AG04450 (cell line): ENCODE measurements at regions of chr1 and their contacts with region 1.

Region 1: GRCh38 chr1:95084317-95085176 is 11.8 kb upstream of the ALG14 start:
- DNase-seq: no peak
- H3K4me3 ChIP-seq: no peak overlapping the region
- H3K27ac ChIP-seq: no peak overlapping the region
- H3K27me3 ChIP-seq: peaks cover 6% of the 10 kb centered on the region
- CTCF ChIP-seq: peak; percentile 57

Region 2: GRCh38 chr1:94903280-94904009 is 181.1 kb before region 1 on chr1:
- CTCF ChIA-PET with region 1: no interaction called
- POLR2A ChIA-PET with region 1: no interaction called
- DNase-seq: no peak
- H3K4me3 ChIP-seq: no peak overlapping the region
- H3K27ac ChIP-seq: no peak overlapping the region
- H3K27me3 ChIP-seq: no peaks in the 10 kb centered on the region
- CTCF ChIP-seq: no peak

Region 3: DNA sequence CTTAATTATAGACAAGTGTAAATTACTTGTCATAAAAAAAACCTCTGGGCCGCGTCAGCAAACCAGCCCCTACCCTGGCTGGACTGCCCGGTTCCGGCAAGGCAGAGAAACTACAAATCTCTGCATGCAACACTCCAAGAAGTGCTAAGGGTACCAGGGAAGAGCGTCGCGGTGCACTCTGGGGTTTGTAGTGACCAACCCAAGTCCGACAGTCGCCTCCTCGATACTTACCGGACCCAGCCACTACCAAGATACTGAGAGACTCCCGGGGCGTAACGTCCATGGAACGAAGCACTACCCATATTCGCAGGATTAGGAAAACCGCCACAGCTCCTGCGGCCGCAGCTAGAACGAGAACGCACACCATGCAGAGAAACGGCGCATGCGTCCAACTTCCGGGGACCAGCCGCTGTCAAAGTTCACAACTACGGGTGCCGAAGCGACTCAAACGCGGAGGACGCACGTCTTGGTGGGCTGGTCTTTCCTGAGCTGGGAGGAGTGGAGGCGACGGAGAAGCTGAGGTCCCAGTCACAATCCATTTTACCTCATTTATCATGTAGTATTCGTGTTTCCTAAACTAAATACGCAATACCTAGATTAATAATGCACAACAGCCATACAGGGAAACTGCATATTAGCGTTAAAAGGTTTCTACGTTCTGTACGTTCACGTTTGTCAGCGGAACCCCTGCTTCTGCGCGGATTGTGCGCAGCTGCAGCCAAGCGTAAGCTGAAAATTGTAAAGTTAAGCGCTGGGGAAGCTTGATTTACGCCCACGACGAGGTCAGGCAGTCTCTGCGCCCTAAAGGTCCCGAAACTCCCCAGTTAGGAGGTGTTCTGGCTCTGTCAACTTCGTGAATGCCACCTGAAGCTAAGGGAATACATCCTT is 11.8 kb before region 1 on chr1 and contains the start of gene ALG14:
- CTCF ChIA-PET with region 1: interaction called, 17 read pairs
- POLR2A ChIA-PET with region 1: interaction called, 3 read pairs
- DNase-seq: peak; percentile 89
- H3K4me3 ChIP-seq: peak within 1 kb of the TSS; percentile 87
- H3K27ac ChIP-seq: peak within 1 kb of the TSS; percentile 70
- H3K27me3 ChIP-seq: no peaks in the 10 kb centered on the region
- CTCF ChIP-seq: no peak
- polyA plus RNA-seq, gene ALG14: 2.6 and 3.1 TPM in 2 replicates

Region 4: DNA sequence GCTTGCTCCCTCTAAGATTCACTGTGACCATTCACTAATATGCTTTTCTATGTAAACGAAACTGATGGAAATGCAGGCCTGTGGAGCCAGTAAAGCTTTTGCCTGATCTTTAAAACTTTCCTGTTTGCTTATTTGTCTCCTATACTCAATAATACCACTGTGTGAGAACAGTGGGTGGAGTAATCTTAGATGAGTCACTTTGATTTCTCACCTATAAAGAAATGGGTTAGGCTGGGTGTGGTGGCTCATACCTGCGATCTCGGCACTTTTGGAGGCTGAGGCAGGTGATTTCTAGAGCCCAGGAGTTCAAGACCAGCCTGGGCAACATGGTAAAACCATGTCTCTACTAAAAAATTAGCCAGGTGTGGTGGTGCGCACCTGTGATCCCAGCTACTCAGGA is 220.3 kb after region 1 on chr1:
- CTCF ChIA-PET with region 1: no interaction called
- POLR2A ChIA-PET with region 1: no interaction called
- DNase-seq: no peak
- H3K4me3 ChIP-seq: no peak overlapping the region
- H3K27ac ChIP-seq: no peak overlapping the region
- H3K27me3 ChIP-seq: peaks cover 7% of the 10 kb centered on the region
- CTCF ChIP-seq: no peak